ENCODE measurements at regions of chr3 and their contacts with region 1.

Region 1: DNA sequence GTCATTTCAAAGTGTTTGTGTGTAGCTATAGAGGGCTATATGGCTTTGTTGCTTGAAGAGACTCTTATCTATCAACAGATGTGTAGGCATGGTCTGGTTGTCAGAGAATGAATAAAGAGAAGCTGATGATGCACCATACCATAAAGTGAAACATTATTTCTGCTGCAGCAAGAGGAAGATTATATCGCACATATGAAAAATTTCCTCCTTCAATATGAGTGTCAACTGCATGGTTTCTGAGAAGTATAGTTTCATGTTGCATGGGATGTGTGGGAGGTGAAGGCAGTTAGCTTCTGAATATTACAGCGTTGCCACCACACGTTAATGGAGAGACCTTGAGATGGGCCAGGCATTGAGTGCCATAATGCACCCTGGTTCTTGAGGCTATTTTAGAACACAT is 217.9 kb downstream of the SATB1 start:
- DNase-seq: no peak
- H3K4me3 Mint-ChIP-seq: no peak overlapping the region
- H3K27ac Mint-ChIP-seq: peak overlapping the region; percentile 70
- H3K4me1 Mint-ChIP-seq: peaks cover 12% of the 10 kb centered on the region
- H3K27me3 Mint-ChIP-seq: peaks cover 4% of the 10 kb centered on the region

Region 2: DNA sequence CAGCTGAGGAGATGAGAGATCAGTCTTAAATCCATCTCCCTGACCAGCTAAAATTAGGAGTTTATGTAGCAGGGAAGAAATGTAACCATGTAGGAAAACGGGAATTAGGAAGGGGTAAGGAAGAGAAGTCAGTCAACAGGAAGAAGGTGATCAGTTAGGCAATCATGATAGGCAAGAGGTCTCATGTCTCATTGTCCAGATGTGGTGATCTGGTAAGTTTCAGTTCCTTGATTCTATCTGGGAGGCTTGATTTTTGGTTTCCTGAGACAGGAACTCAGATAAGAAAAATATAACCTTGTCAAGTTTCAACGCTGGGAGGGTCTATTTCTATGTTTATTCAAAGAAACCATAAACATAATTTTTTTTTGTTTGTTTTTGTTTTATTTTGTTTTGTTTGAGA is 424.5 kb before region 1 on chr3:
- intact Hi-C with region 1: no loop called
- DNase-seq: no peak
- H3K4me3 Mint-ChIP-seq: no peak overlapping the region
- H3K27ac Mint-ChIP-seq: no peak overlapping the region
- H3K4me1 Mint-ChIP-seq: peaks cover 18% of the 10 kb centered on the region
- H3K27me3 Mint-ChIP-seq: peaks cover 2% of the 10 kb centered on the region

Region 3: GRCh38 chr3:18061737-18062656 is 145.2 kb before region 1 on chr3:
- intact Hi-C with region 1: no loop called
- DNase-seq: no peak
- H3K4me3 Mint-ChIP-seq: no peak overlapping the region
- H3K27ac Mint-ChIP-seq: no peak overlapping the region
- H3K4me1 Mint-ChIP-seq: no peaks in the 10 kb centered on the region
- H3K27me3 Mint-ChIP-seq: peaks cover 2% of the 10 kb centered on the region

Region 4: GRCh38 chr3:18098960-18099587 is 108.2 kb before region 1 on chr3:
- intact Hi-C with region 1: loop called (anchors 1 kb)
- DNase-seq: peak; percentile 57
- H3K4me3 Mint-ChIP-seq: peak overlapping the region; percentile 11
- H3K27ac Mint-ChIP-seq: peak overlapping the region; percentile 76
- H3K4me1 Mint-ChIP-seq: peaks cover 18% of the 10 kb centered on the region
- H3K27me3 Mint-ChIP-seq: peaks cover 1% of the 10 kb centered on the region

Region 5: GRCh38 chr3:18189282-18190050 is 17.8 kb before region 1 on chr3:
- intact Hi-C with region 1: no loop called
- DNase-seq: no peak
- H3K4me3 Mint-ChIP-seq: no peak overlapping the region
- H3K27ac Mint-ChIP-seq: no peak overlapping the region
- H3K4me1 Mint-ChIP-seq: no peaks in the 10 kb centered on the region
- H3K27me3 Mint-ChIP-seq: peaks cover 11% of the 10 kb centered on the region

Region 6: GRCh38 chr3:18237251-18238005 is 30.2 kb after region 1 on chr3:
- intact Hi-C with region 1: loop called (anchors 2 kb)
- DNase-seq: no peak
- H3K4me3 Mint-ChIP-seq: no peak overlapping the region
- H3K27ac Mint-ChIP-seq: no peak overlapping the region
- H3K4me1 Mint-ChIP-seq: peaks cover 5% of the 10 kb centered on the region
- H3K27me3 Mint-ChIP-seq: peaks cover 8% of the 10 kb centered on the region

Measured in activated CD4-positive, alpha-beta T cell treated with anti-CD3 and anti-CD28 coated beads, Interleukin-2, amount 10 ng/mL, durations not matched to agents 24 days and 14 days (primary cell).